Prostate gland (tissue), 2 donors: ENCODE measurements at regions of chr11 and their contacts with region 1.

Region 1: GRCh38 chr11:64916775-64917662 is at the start of gene ATG2A:
- DNase-seq: peak; percentile 99
- H3K4me3 ChIP-seq: peak within 1 kb of the TSS; percentile 76 to 92
- H3K27ac ChIP-seq: peak within 1 kb of the TSS; percentile 71 to 80
- H3K4me1 ChIP-seq: peaks cover 17% of the 10 kb centered on the region
- H3K27me3 ChIP-seq: no peaks in the 10 kb centered on the region
- CTCF ChIP-seq: peak in 1 of 4 experiments; percentile 18
- POLR2A ChIP-seq: peak; percentile 98
- total RNA-seq, gene ATG2A: 38.4 to 66.1 TPM

Region 2: DNA sequence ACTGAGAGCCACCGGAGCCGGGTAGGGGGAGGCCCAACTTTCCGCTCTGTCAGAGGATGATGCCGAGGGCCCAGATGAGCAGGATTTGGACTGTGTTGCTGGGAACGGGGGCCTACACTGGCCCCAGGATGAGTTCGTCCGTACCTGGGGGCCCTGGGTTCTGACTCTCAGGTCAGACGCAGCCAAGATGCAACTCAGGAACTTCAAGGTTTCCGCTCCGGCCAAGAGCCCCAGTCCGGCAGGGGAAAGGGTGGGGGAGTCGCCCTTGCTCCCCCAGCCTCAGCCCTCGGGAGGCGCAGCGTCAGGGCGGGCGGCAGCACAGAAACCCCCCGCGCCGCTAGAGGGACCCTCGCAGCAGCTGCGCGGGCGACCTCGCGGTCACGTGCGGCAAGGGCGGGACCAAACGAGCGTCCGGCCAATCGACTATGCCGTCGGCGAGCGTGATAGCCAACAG is 96.7 kb after region 1 on chr11:
- intact Hi-C with region 1: loop called (anchors 2 kb)
- DNase-seq: peak; percentile 88
- H3K4me3 ChIP-seq: peak overlapping the region; percentile 68 to 76
- H3K27ac ChIP-seq: peak overlapping the region; percentile 99
- H3K4me1 ChIP-seq: no peaks in the 10 kb centered on the region
- H3K27me3 ChIP-seq: no peaks in the 10 kb centered on the region
- CTCF ChIP-seq: peak in 2 of 4 experiments; percentile 89 to 90
- POLR2A ChIP-seq: no peak

Region 3: DNA sequence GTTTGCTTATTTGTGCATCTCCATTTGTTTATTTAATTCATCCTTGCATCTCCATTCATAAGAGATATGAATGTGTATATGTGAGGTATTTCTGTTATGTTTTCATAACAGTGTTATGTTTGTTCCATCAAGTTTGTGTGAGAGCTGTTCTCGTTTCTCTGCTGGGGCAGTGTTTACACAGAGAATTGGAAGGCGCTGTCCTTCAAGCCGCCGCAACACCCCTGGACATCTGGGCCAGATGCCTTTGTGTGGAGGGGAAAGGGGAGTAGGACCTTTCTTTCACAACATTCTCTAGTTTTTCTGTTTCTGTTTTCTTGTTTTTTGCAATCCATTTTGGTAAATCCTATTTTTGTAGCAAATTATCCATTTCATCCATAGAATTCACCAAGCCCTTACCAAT is 187.6 kb after region 1 on chr11:
- intact Hi-C with region 1: no loop called
- DNase-seq: no peak
- H3K4me3 ChIP-seq: no peak overlapping the region
- H3K27ac ChIP-seq: peak overlapping the region; percentile 18 to 58
- H3K4me1 ChIP-seq: peaks cover 21% of the 10 kb centered on the region
- H3K27me3 ChIP-seq: no peaks in the 10 kb centered on the region
- CTCF ChIP-seq: no peak
- POLR2A ChIP-seq: no peak